Endothelial cell of umbilical vein (primary cell): ENCODE measurements at regions of chr9 and their contacts with region 1.

Region 1: DNA sequence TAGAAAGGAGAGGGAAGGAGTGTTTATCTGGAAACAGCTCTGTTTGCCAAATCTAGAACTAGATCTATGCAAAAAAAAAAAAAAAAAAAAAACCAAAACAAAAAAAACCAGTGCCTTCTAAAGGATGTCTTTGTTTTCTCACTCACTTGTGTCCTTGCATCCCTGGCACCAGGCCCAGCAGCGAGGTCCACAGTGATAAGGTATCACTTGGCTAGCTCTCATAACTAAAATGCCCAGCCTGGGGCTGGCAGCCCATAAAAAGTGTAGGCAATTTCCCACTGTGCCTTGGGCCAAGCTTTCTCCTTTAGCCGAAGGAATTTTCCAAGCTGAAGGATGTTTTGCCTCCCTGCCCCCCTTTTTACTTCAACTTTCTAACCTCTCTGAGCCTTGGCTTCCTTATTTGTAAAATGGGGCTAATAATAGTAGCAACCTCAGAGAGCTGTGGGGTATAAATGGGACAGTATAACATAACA is 20.8 kb downstream of the RGS3 start:
- DNase-seq: peak; percentile 99
- H3K4me3 ChIP-seq: no peak overlapping the region
- H3K27ac ChIP-seq: peak overlapping the region; percentile 31
- H3K4me1 ChIP-seq: peaks cover 23% of the 10 kb centered on the region
- H3K27me3 ChIP-seq: no peaks in the 10 kb centered on the region
- CTCF ChIP-seq: no peak
- POLR2A ChIP-seq: peak; percentile 37

Region 2: GRCh38 chr9:113461285-113461684 is 23.0 kb before region 1 on chr9:
- CTCF ChIA-PET with region 1: interaction called, 3 read pairs
- POLR2A ChIA-PET with region 1: interaction called, 11 read pairs
- dilution Hi-C with region 1: no loop called
- intact Hi-C with region 1: no loop called
- DNase-seq: no peak
- H3K4me3 ChIP-seq: no peak overlapping the region
- H3K27ac ChIP-seq: no peak overlapping the region
- H3K4me1 ChIP-seq: peaks cover 3% of the 10 kb centered on the region
- H3K27me3 ChIP-seq: no peaks in the 10 kb centered on the region
- CTCF ChIP-seq: no peak
- POLR2A ChIP-seq: no peak

Region 3: GRCh38 chr9:113468716-113469448 is 15.4 kb before region 1 on chr9:
- CTCF ChIA-PET with region 1: interaction called, 3 read pairs
- POLR2A ChIA-PET with region 1: interaction called, 3 read pairs
- dilution Hi-C with region 1: no loop called
- intact Hi-C with region 1: loop called (anchors 2 kb)
- DNase-seq: no peak
- H3K4me3 ChIP-seq: no peak overlapping the region
- H3K27ac ChIP-seq: no peak overlapping the region
- H3K4me1 ChIP-seq: no peaks in the 10 kb centered on the region
- H3K27me3 ChIP-seq: no peaks in the 10 kb centered on the region
- CTCF ChIP-seq: no peak
- POLR2A ChIP-seq: no peak

Region 4: DNA sequence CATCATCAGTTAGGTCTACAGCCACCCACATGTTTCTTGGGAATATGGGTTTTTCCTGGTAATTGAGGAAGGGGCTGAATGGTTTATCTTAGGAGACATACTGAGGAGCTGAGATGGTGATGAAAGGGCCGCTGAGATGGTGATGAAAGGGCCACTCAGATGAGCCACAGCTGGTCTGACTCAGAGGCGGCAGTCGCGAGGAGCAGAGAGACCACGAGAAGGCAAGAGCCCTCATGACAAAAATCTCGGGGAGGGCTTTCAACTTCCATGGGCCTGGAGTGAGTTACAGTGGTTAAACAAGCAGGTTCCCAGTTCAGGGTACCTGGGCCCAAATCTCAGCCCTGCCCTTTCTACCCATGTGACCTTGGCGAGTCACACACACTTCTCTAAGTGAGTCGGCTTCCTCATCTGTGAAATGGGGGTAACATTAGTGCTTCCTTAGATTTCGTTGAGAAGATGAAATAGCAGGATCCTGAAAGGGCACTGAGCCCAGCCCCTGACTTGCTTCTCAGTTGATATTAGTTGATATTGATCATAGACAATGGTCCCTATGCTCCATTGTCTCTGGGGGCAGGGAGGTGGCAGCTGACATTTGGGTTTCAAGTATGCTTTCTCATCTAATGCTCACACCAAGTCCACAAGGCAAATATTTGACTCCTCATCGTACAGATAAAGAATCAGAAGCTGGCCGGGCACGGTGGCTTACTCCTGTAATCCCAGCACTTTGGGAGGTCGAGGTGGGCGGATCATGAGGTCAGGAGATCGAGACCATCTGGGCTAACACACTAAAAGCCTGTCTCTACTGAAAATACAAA is 148.7 kb after region 1 on chr9:
- CTCF ChIA-PET with region 1: no interaction called
- POLR2A ChIA-PET with region 1: no interaction called
- dilution Hi-C with region 1: no loop called
- intact Hi-C with region 1: no loop called
- DNase-seq: no peak
- H3K4me3 ChIP-seq: no peak overlapping the region
- H3K27ac ChIP-seq: no peak overlapping the region
- H3K4me1 ChIP-seq: peaks cover 22% of the 10 kb centered on the region
- H3K27me3 ChIP-seq: no peaks in the 10 kb centered on the region
- CTCF ChIP-seq: no peak
- POLR2A ChIP-seq: no peak

Region 5: GRCh38 chr9:114163517-114163951 is 679.2 kb after region 1 on chr9:
- CTCF ChIA-PET with region 1: no interaction called
- POLR2A ChIA-PET with region 1: no interaction called
- dilution Hi-C with region 1: no loop called
- intact Hi-C with region 1: no loop called
- DNase-seq: peak; percentile 25
- H3K4me3 ChIP-seq: no peak overlapping the region
- H3K27ac ChIP-seq: no peak overlapping the region
- H3K4me1 ChIP-seq: peaks cover 2% of the 10 kb centered on the region
- H3K27me3 ChIP-seq: no peaks in the 10 kb centered on the region
- CTCF ChIP-seq: no peak
- POLR2A ChIP-seq: no peak